ENCODE measurements at regions of chr16 and their contacts with region 1.

Region 1: GRCh38 chr16:25126820-25127232 is 15.3 kb downstream of the LCMT1 start:
- DNase-seq: peak; percentile 82
- ATAC-seq: peak; percentile 97
- H3K4me3 ChIP-seq: no peak overlapping the region
- H3K27ac ChIP-seq: peak overlapping the region; percentile 33
- H3K4me1 ChIP-seq: peaks cover 16% of the 10 kb centered on the region
- H3K27me3 ChIP-seq: no peaks in the 10 kb centered on the region
- CTCF ChIP-seq: peak; percentile 75

Region 2: DNA sequence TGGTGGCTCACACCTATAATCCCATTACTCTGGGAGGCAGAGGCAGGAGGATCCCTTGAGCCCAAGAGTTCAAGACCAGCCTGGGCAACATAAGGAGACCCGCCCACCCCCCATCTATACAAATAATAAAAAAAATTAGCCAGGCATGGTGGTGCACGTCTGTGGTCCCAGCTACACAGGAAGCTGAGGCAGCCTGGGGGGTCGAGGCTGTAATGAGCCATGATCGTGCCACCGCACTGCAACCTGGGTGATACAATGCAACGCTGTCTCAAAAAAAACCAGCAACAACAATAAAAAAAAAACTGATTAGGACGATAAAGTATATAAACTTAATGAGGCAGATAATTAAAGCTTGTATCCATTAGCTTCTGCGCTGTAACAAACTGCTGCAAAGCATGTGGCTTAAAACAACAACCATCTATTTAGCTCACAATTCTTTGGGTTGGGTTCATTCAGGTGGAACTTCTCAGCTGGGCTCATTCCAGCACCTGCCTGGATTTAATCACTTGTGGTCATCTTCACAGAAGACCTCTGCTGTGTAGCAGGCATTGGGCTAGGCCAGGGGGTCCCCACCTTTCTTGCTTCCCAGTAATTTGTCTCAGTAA is 30.5 kb after region 1 on chr16:
- CTCF ChIA-PET with region 1: interaction called, 19 read pairs
- POLR2A ChIA-PET with region 1: no interaction called
- intact Hi-C with region 1: no loop called
- DNase-seq: no peak
- ATAC-seq: no peak
- H3K4me3 ChIP-seq: no peak overlapping the region
- H3K27ac ChIP-seq: no peak overlapping the region
- H3K4me1 ChIP-seq: peaks cover 7% of the 10 kb centered on the region
- H3K27me3 ChIP-seq: no peaks in the 10 kb centered on the region
- CTCF ChIP-seq: no peak

Region 3: GRCh38 chr16:25224731-25225319 is 98.0 kb after region 1 on chr16:
- CTCF ChIA-PET with region 1: interaction called, 14 read pairs
- POLR2A ChIA-PET with region 1: no interaction called
- intact Hi-C with region 1: loop called (anchors 5 kb)
- DNase-seq: no peak
- ATAC-seq: no peak
- H3K4me3 ChIP-seq: no peak overlapping the region
- H3K27ac ChIP-seq: no peak overlapping the region
- H3K4me1 ChIP-seq: no peaks in the 10 kb centered on the region
- H3K27me3 ChIP-seq: no peaks in the 10 kb centered on the region
- CTCF ChIP-seq: no peak